Caco-2 (cell line): ENCODE measurements at regions of chr18 and their contacts with region 1.

Region 1: DNA sequence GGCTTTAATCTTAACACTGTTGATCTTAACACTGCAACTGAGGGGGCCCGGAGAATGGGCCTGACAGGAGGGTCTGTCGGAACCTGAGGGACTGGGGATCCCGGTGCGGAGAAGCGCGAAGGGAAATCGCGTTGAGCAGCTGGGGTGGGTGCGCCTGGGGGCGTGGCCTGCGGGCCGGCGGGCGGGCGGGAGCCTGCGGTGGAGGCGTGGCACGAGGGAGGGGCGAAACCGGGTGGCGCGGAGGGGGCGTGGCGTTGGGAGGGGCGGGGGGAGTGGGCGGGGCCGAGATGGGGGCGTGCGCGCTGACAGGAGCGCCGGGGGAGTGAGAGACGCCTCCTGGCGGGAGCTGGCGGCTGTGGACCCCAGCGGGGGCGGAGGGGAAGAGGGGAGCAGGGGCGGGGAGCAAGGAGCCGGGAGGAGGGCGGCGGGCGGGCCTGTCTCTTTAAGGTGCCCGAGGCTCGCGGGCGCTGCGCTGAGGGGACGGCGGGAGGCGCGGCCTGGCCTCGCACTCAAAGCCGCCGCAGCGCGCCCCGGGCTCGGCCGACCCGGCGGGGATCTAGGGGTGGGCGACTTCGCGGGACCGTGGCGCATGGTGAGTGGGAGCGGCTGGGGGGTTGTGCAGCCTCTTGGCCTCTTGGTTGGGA is at the start of gene TWSG1:
- DNase-seq: peak; percentile 95 to 96
- H3K4me3 ChIP-seq: peak within 1 kb of the TSS; percentile 80
- H3K4me3 Mint-ChIP-seq: peak within 1 kb of the TSS; percentile 97
- H3K27ac Mint-ChIP-seq: peak within 1 kb of the TSS; percentile 97
- H3K4me1 ChIP-seq: 0 out of 2 replicates have a peak, but pooled peaks cover 4% of the 10 kb centered on the region
- H3K4me1 Mint-ChIP-seq: no peaks in the 10 kb centered on the region
- H3K27me3 ChIP-seq: no peaks in the 10 kb centered on the region
- H3K27me3 Mint-ChIP-seq: no peaks in the 10 kb centered on the region
- CTCF ChIP-seq: peak; percentile 38 to 84
- total RNA-seq, gene TWSG1: 43.7 and 43.9 TPM in 2 replicates

Region 2: DNA sequence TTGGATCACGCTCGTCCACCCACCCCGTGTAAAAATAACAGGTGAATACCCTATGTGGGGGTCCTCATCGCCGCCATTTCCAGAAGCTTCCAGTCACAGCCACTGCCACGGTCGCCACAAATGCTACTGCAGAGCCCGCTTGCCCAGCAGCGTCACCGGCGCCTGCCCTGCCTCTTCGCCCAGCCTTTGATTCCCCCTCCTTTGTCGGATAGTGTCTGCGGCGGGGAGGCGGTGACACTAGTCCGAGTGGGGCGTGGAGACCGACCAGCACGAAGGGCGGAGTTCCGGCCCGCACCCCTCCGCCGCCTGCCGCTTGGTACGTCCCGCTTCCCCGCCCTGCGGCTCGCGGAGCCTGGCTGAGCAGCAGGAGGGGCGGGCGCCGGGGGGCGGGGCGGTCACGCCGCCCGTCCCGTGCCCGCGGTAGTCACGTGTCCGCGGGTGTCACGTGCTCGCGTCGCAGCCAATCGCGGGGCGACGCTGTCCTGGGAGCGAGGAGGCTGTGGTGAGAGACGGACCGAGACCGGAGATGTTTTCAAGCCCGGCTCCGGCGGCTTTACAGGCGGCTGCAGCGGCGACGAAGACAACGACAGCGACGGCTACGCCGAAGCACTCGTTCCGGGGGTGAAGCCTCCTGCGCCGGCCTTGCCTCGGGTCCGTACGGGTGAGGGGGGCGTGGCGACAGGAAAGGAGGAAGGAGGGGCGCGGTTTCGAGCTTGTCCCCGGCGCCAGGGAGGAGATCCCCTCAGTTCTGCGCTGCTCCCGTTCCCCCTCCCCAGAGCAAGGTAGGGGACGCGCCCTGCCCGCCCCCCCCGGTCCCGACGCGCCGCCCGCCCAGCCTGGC is 197.9 kb before region 1 on chr18 and contains the start of gene ANKRD12:
- CTCF ChIA-PET with region 1: no interaction called
- POLR2A ChIA-PET with region 1: no interaction called
- intact Hi-C with region 1: loop called (anchors 10 kb)
- DNase-seq: peak; percentile 97 to 98
- H3K4me3 ChIP-seq: peak within 1 kb of the TSS; percentile 96
- H3K4me3 Mint-ChIP-seq: peak within 1 kb of the TSS; percentile 94
- H3K27ac Mint-ChIP-seq: peak within 1 kb of the TSS; percentile 96
- H3K4me1 ChIP-seq: peaks cover 22% of the 10 kb centered on the region
- H3K4me1 Mint-ChIP-seq: peaks cover 22% of the 10 kb centered on the region
- H3K27me3 ChIP-seq: no peaks in the 10 kb centered on the region
- H3K27me3 Mint-ChIP-seq: no peaks in the 10 kb centered on the region
- CTCF ChIP-seq: no peak
- total RNA-seq, gene ANKRD12: 33.2 and 36.5 TPM in 2 replicates

Region 3: GRCh38 chr18:9210966-9211365 is 123.5 kb before region 1 on chr18:
- CTCF ChIA-PET with region 1: no interaction called
- POLR2A ChIA-PET with region 1: no interaction called
- intact Hi-C with region 1: loop called (anchors 10 kb)
- DNase-seq: no peak
- H3K4me3 ChIP-seq: no peak overlapping the region
- H3K4me3 Mint-ChIP-seq: no peak overlapping the region
- H3K27ac Mint-ChIP-seq: no peak overlapping the region
- H3K4me1 ChIP-seq: no peaks in the 10 kb centered on the region
- H3K4me1 Mint-ChIP-seq: peaks cover 8% of the 10 kb centered on the region
- H3K27me3 ChIP-seq: no peaks in the 10 kb centered on the region
- H3K27me3 Mint-ChIP-seq: no peaks in the 10 kb centered on the region
- CTCF ChIP-seq: no peak

Region 4: GRCh38 chr18:9275890-9276289 is 58.6 kb before region 1 on chr18:
- CTCF ChIA-PET with region 1: no interaction called
- POLR2A ChIA-PET with region 1: interaction called, 11 read pairs
- intact Hi-C with region 1: no loop called
- DNase-seq: no peak
- H3K4me3 ChIP-seq: no peak overlapping the region
- H3K4me3 Mint-ChIP-seq: no peak overlapping the region
- H3K27ac Mint-ChIP-seq: no peak overlapping the region
- H3K4me1 ChIP-seq: no peaks in the 10 kb centered on the region
- H3K4me1 Mint-ChIP-seq: no peaks in the 10 kb centered on the region
- H3K27me3 ChIP-seq: no peaks in the 10 kb centered on the region
- H3K27me3 Mint-ChIP-seq: no peaks in the 10 kb centered on the region
- CTCF ChIP-seq: no peak

Region 5: DNA sequence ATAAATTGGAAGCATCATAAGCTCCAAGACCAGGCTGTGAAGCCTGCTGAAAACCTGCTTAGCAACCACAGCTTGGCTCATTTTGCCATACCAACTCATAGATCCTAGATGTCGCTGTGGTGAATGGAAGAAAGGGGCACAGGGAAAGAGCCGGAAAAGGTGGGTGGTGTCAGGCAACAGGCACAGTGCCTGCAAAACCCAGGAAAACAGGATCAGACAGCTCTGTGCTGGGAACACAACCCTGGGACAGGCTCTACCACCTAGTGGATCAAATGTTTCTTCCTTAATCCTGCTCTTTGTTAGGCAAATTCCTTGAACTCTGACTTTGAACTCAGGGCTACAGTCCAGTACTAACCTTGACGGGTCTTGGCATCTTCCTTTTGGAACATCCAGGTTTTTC is 31.7 kb after region 1 on chr18:
- CTCF ChIA-PET with region 1: interaction called, 6 read pairs
- POLR2A ChIA-PET with region 1: interaction called, 6 read pairs
- intact Hi-C with region 1: loop called (anchors 2 kb)
- DNase-seq: peak in 1 of 2 experiments; percentile 15
- H3K4me3 ChIP-seq: no peak overlapping the region
- H3K4me3 Mint-ChIP-seq: no peak overlapping the region
- H3K27ac Mint-ChIP-seq: no peak overlapping the region
- H3K4me1 ChIP-seq: peaks cover 35% of the 10 kb centered on the region
- H3K4me1 Mint-ChIP-seq: peaks cover 22% of the 10 kb centered on the region
- H3K27me3 ChIP-seq: no peaks in the 10 kb centered on the region
- H3K27me3 Mint-ChIP-seq: no peaks in the 10 kb centered on the region
- CTCF ChIP-seq: no peak

Region 6: GRCh38 chr18:9474983-9475642 is 140.7 kb after region 1 on chr18 and contains the start of gene RALBP1:
- CTCF ChIA-PET with region 1: interaction called, 3 read pairs
- POLR2A ChIA-PET with region 1: interaction called, 6 read pairs
- intact Hi-C with region 1: loop called (anchors 2 kb)
- DNase-seq: peak; percentile 99 to 100
- H3K4me3 ChIP-seq: peak within 1 kb of the TSS; percentile 84
- H3K4me3 Mint-ChIP-seq: peak within 1 kb of the TSS; percentile 75
- H3K27ac Mint-ChIP-seq: peak within 1 kb of the TSS; percentile 86
- H3K4me1 ChIP-seq: peaks cover 25% of the 10 kb centered on the region
- H3K4me1 Mint-ChIP-seq: peaks cover 40% of the 10 kb centered on the region
- H3K27me3 ChIP-seq: no peaks in the 10 kb centered on the region
- H3K27me3 Mint-ChIP-seq: no peaks in the 10 kb centered on the region
- CTCF ChIP-seq: no peak
- total RNA-seq, gene RALBP1: 64.9 and 66.3 TPM in 2 replicates